GM18951 (cell line): ENCODE measurements at regions of chr5 and their contacts with region 1.

Region 1: DNA sequence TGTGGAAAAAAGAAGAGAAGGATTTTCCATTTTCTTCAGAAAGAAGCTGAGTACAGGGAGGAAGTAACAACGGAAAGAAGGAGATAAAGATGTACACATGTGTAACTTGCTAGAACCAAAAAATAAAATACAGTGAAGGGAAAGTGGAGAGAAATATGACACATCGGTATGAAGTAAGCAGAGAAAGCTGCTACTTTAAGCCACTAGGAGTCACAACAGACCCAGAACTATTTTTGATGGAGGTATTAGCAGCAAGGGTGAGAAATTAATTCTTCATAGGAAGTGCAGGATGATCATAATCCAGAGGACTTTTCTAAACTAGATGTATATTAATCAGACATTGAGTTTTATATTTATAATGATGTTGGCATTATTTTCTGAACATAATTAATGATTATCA is 88.5 kb downstream of the FAM174A start:
- POLR2A ChIP-seq: no peak

Region 2: GRCh38 chr5:100877274-100877673 is 253.6 kb after region 1 on chr5:
- in situ Hi-C with region 1: no loop called
- POLR2A ChIP-seq: no peak

Region 3: GRCh38 chr5:101024299-101024698 is 400.6 kb after region 1 on chr5:
- in situ Hi-C with region 1: no loop called
- POLR2A ChIP-seq: no peak

Region 4: DNA sequence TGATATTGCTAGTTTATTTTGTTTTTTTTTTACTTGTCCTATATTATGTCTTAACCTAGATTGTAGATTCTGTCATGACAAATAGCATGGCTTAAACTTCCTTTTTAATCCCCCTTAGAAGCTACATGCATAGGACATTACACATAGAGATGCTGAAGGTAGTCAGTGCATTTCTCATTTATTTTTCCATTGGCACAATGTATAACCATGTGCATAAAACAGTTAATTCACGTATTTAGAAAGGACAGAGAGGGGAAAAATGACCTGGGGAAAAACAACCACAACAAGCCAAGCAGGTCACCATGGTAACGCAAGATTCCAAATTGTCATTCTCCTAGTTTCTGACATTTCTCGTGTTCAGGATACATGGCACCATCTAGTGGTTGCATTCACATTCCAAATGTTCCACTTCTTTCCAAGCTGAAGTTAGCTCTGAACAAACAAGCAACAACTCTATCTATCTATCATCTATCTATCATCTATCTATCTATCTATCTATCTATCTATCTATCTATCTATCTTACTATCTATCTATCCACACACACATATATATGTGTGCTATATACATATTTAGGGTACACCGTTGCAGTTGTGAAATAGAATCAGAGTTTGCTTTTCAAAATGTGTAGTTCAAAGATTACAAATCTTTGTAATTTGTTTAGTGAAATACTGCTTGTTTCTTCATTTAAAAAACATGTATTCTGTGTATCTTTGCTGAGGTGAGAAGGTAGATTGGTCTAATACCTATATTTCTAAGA is 766.6 kb after region 1 on chr5:
- in situ Hi-C with region 1: loop called (anchors 25 kb)
- POLR2A ChIP-seq: no peak